Astrocyte of the cerebellum (primary cell): ENCODE measurements at regions of chr4 and their contacts with region 1.

Region 1: GRCh38 chr4:1154523-1155182 is 17.7 kb downstream of the SPON2 start:
- DNase-seq: no peak
- H3K4me3 ChIP-seq: no peak overlapping the region
- CTCF ChIP-seq: no peak

Region 2: DNA sequence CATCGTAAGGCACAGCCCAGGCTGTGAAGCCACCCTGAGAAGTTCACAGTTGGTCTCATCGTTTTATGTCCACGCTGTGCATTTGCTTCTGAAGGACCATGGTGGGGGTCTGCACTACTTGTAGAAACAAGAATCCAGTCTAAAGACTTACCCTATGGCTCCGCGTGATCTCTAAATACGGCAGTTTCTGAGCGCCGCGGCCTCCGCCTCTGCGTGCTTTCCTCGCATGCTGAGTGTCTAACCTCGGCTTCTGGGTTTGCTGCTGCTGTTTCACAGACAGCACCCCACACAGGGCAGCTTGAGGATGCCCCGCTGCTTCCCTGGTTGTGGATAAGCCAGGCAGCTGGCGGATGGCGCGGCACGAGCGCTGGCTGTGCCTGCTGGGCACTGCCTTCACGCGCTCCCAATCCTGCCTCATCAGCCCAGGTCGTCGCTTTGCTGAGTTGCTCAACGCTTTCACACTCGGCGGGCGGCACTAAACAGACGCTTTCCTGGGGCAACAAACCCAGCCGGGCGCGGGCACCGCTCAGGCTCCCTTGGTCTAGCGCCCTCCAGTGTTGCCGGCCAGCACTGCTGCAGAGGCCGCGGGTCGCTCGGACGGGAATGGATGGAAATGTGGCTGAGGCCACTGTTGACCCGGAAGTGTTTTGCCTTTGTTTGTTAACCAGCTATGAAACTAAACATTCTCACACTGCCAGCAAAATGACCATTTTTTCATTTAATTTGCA is 104.0 kb before region 1 on chr4:
- in situ Hi-C with region 1: no loop called
- DNase-seq: no peak
- H3K4me3 ChIP-seq: no peak overlapping the region
- CTCF ChIP-seq: peak; percentile 59

Region 3: DNA sequence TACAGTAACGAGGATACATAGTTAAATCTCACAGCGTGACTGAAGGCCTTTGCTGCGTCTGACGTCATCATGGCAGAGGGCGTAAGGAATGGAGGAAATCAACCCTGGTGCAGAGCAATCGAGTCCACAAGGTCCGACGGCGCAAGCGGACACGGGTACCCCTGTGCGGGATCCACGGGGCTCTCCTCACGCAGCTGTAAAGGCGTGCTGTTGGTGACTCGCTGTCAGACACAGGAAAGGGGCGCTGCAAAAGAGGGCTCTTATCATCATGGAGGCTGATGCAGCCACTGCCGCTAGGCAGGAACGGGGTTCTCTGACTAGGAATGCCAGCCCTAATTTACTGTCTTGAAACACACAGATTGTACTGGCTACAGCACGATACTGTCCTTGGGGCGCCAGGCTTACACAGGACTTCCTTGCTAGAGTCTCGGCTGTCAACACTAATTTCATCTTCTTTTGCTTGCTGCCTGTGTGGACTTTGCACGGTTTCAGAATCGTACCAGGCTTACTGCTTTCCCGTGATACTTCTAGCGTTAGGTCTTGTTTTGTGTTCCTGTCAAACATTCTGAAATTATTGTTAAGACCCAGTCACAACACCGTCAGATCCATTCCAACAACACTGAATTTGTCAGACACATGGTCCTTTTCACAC is 54.8 kb before region 1 on chr4:
- in situ Hi-C with region 1: no loop called
- DNase-seq: no peak
- H3K4me3 ChIP-seq: no peak overlapping the region
- CTCF ChIP-seq: no peak

Region 4: GRCh38 chr4:1200425-1201035 is 45.9 kb after region 1 on chr4:
- in situ Hi-C with region 1: loop called (anchors 5 kb)
- DNase-seq: peak; percentile 59
- H3K4me3 ChIP-seq: no peak overlapping the region
- CTCF ChIP-seq: no peak